Activated T-helper 1 cell treated with anti-CD3 and anti-CD28 coated beads, Interleukin-12 subunit alpha, Interleukin-12 subunit beta, Interleukin-2, Interleukin-4 antibody, amounts not matched to agents 30 ng/mL and 10 ng/mL and 1 ng/mL, durations not matched to agents 14 hours and 24 hours and 36 hours (primary cell): ENCODE measurements at regions of chr14 and their contacts with region 1.

Region 1: GRCh38 chr14:35883677-35884293 is 57.6 kb downstream of the BRMS1L start:
- DNase-seq: no peak
- H3K4me3 Mint-ChIP-seq: no peak overlapping the region
- H3K27ac Mint-ChIP-seq: no peak overlapping the region
- H3K4me1 Mint-ChIP-seq: peaks cover 6% of the 10 kb centered on the region
- H3K27me3 Mint-ChIP-seq: no peaks in the 10 kb centered on the region

Region 2: GRCh38 chr14:35826218-35826951 is 57.4 kb before region 1 on chr14 and contains the start of gene BRMS1L:
- intact Hi-C with region 1: no loop called
- DNase-seq: peak; percentile 96
- H3K4me3 Mint-ChIP-seq: peak within 1 kb of the TSS; percentile 88
- H3K27ac Mint-ChIP-seq: peak within 1 kb of the TSS; percentile 90
- H3K4me1 Mint-ChIP-seq: peaks cover 16% of the 10 kb centered on the region
- H3K27me3 Mint-ChIP-seq: peaks cover 4% of the 10 kb centered on the region
- total RNA-seq, gene BRMS1L: 6.3 and 9.1 TPM in 2 replicates

Region 3: DNA sequence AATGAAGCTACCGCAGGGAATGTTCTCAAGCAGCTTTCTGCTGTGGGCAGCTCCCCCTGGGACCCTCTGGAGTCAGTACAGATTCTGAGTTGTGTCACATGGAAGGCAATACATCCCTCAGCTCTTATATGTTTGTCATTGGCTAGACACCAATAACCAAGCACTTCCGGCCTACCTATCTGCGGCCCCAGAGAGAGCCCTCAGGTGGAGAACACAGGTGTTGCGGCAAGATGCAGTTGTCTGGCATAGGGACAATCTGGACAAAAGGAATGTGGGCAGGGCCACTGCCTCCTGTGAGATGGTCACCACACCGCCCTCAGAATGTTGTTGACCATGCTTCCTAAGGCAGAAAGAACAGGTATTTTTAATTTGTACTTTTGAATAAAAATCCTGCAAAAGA is 61.1 kb after region 1 on chr14:
- intact Hi-C with region 1: loop called (anchors 1 kb)
- DNase-seq: no peak
- H3K4me3 Mint-ChIP-seq: no peak overlapping the region
- H3K27ac Mint-ChIP-seq: no peak overlapping the region
- H3K4me1 Mint-ChIP-seq: peaks cover 8% of the 10 kb centered on the region
- H3K27me3 Mint-ChIP-seq: peaks cover 2% of the 10 kb centered on the region

Region 4: DNA sequence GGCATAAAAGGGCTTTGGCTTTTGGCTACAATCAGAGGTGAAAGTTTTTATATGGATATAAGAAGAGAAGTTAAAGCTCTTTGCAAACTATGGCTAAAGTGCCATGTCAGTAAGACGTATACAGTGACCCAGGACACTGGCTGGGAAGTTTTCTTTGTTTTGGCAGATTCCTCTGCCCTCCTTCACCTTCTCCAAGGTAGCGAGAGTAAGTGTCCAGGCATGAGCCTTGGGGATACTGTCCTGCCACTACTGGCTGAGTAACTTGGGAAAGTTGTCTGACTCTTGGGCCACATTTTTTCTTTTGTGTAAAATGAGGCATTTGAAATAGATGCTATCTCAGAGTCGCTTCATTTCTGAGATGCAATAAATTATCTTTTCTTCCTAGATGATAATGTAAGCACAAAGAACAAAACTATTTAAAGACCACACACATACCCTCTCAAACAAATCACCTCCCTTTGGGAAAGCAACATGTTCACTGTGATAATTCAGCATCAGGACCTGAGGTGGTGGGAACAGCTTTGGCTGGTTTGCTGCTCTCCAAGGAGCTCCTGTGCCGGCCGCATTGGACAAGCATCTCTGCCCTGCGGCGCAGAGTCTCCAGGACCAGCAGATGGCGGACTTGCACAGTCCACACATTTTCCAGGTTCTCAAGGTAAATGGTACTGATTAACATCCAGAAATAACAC is 186.4 kb after region 1 on chr14:
- intact Hi-C with region 1: loop called (anchors 1 kb)
- DNase-seq: no peak
- H3K4me3 Mint-ChIP-seq: no peak overlapping the region
- H3K27ac Mint-ChIP-seq: no peak overlapping the region
- H3K4me1 Mint-ChIP-seq: no peaks in the 10 kb centered on the region
- H3K27me3 Mint-ChIP-seq: peaks cover 22% of the 10 kb centered on the region

Region 5: DNA sequence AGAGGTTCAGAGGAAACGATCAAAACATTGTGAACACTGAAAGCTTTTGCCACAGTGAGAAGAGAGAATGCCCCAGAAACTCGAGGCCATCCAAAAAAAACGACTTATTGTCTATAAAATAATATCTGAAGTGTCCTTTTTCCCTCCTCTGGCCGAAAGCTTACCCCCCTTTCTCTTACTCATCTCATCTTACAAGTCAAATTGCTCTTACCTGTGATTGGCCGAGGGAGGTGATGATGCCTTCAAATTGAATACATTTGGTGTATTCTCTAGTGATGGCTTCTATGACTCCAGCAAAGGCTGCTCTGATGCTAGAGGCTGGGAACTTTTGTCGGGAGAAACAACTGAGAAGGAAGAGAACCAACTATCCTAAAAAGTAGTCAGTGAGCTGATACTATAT is 202.1 kb after region 1 on chr14:
- intact Hi-C with region 1: no loop called
- DNase-seq: no peak
- H3K4me3 Mint-ChIP-seq: no peak overlapping the region
- H3K27ac Mint-ChIP-seq: no peak overlapping the region
- H3K4me1 Mint-ChIP-seq: no peaks in the 10 kb centered on the region
- H3K27me3 Mint-ChIP-seq: peaks cover 15% of the 10 kb centered on the region

Region 6: DNA sequence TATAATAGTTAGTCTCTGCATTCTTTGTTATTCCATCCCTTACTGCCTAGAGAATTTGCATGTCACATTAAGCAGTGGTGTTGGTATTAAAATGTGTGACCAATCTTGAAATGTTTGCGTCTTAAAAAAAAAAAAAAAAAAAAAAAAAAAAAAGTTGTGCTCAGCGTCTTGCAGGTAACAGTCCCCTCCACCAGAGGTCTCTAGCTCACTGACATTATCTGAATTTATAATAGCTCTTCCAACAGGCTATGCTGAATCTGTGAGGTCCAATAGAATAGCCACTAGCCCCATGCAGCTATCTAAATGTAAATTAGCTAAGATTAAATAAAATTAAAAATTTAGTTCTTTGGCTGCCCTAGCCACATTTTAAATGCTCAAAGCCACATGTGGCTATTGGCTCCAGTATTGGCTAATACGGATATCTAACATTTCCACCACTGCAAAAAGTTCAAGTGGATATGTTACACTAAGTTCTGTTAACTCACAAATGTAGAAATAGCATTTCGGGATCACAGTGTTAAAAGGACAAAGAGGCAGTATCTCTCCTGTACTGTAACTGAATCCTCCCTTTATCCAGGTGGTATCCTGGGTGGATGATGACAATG is 670.0 kb after region 1 on chr14:
- intact Hi-C with region 1: loop called (anchors 5 kb)
- DNase-seq: no peak
- H3K4me3 Mint-ChIP-seq: no peak overlapping the region
- H3K27ac Mint-ChIP-seq: no peak overlapping the region
- H3K4me1 Mint-ChIP-seq: no peaks in the 10 kb centered on the region
- H3K27me3 Mint-ChIP-seq: peaks cover 3% of the 10 kb centered on the region

Region 7: GRCh38 chr14:36604757-36605505 is 721.1 kb after region 1 on chr14:
- intact Hi-C with region 1: loop called (anchors 1 kb)
- DNase-seq: peak; percentile 12
- H3K4me3 Mint-ChIP-seq: no peak overlapping the region
- H3K27ac Mint-ChIP-seq: no peak overlapping the region
- H3K4me1 Mint-ChIP-seq: no peaks in the 10 kb centered on the region
- H3K27me3 Mint-ChIP-seq: peaks cover 2% of the 10 kb centered on the region

Region 8: DNA sequence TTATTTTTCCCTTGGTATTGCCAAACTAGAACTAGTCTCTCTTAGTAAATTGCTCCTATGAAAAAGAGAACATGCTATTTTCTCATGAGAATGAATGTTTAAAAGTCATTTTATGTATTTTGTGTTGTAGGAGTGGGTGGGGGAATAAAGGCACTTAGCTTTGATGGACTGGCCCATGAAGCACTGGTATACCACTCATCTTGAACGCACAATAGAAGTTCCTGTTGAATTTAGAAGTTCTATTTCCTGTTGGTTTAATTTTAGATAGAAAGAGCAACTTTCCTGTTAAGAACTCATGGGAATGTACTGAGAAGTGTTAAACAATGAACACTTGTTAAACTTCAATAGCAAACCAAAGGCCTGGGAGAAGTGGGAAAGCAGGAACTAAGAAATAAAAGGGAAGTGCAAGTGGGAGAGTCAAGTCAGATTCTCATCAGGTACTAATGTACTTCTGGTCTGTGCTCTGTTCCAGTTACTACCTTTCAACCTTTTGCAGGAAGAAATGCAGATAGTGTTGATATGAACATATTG is 1734.8 kb after region 1 on chr14:
- intact Hi-C with region 1: no loop called
- DNase-seq: no peak
- H3K4me3 Mint-ChIP-seq: no peak overlapping the region
- H3K27ac Mint-ChIP-seq: no peak overlapping the region
- H3K4me1 Mint-ChIP-seq: no peaks in the 10 kb centered on the region
- H3K27me3 Mint-ChIP-seq: peaks cover 3% of the 10 kb centered on the region